ENCODE measurements at regions of chr11 and their contacts with region 1.

Region 1: DNA sequence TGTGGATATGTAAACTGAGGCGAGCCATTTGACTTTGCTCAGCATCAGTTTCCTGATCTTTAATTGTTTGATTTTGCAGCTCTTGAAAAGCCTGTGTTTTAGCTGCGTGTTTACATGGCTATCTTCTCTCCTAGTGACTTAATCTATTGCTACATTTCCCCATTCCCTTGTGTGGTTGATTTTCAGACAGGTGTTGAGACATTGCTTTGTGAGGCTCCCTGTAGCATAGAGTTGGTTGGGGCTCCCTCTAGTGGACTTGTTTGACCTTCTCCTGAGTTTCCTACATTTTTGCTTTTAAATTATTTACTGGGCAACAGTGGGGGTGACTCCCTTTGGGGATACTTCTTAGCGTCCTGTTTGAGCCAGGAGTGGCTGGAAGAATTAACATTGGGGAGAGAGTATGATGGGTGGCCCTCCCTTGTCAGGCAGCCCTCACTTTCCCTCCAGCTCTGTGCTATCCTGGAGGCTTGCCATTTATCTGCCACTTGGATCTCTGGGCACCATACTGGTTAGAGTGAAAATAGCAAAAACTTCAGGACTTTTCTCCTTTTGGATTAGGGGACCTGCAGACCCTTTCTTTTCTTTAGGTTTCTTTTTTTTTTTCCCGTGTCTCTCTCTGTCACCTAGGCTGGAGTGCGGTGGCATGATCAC is 9.2 kb upstream of the CBL start:
- DNase-seq: peak; percentile 94
- ATAC-seq: peak; percentile 87
- H3K4me3 ChIP-seq: no peak overlapping the region
- H3K27ac ChIP-seq: no peak overlapping the region
- H3K4me1 ChIP-seq: peaks cover 4% of the 10 kb centered on the region; the same call in 1 of the 2 replicates
- H3K27me3 ChIP-seq: no peaks in the 10 kb centered on the region
- CTCF ChIP-seq: peak; percentile 95

Region 2: GRCh38 chr11:119095066-119095880 is 101.7 kb before region 1 on chr11:
- CTCF ChIA-PET with region 1: interaction called, 4 read pairs
- POLR2A ChIA-PET with region 1: no interaction called
- intact Hi-C with region 1: loop called (anchors 2 kb)
- DNase-seq: peak; percentile 100
- ATAC-seq: peak; percentile 79
- H3K4me3 ChIP-seq: peak overlapping the region; percentile 90
- H3K27ac ChIP-seq: peak overlapping the region; percentile 53
- H3K4me1 ChIP-seq: peaks cover 28% of the 10 kb centered on the region
- H3K27me3 ChIP-seq: no peaks in the 10 kb centered on the region
- CTCF ChIP-seq: 0 out of 2 replicates have a peak, but pooled peaks have one; percentile 29

Region 3: GRCh38 chr11:119144825-119145486 is 52.0 kb before region 1 on chr11:
- CTCF ChIA-PET with region 1: interaction called, 9 read pairs
- POLR2A ChIA-PET with region 1: no interaction called
- intact Hi-C with region 1: loop called (anchors 1 kb)
- DNase-seq: peak; percentile 83
- ATAC-seq: peak; percentile 89
- H3K4me3 ChIP-seq: no peak overlapping the region; the same call in 1 of the 2 replicates
- H3K27ac ChIP-seq: no peak overlapping the region
- H3K4me1 ChIP-seq: 0 out of 2 replicates have a peak, but pooled peaks cover 3% of the 10 kb centered on the region
- H3K27me3 ChIP-seq: no peaks in the 10 kb centered on the region
- CTCF ChIP-seq: peak; percentile 63

Region 4: GRCh38 chr11:119168471-119169281 is 28.3 kb before region 1 on chr11 and contains the start of gene NLRX1:
- CTCF ChIA-PET with region 1: interaction called, 3 read pairs
- POLR2A ChIA-PET with region 1: interaction called, 3 read pairs
- intact Hi-C with region 1: loop called (anchors 1 kb)
- DNase-seq: peak; percentile 90
- ATAC-seq: peak; percentile 80
- H3K4me3 ChIP-seq: peak within 1 kb of the TSS; percentile 80
- H3K27ac ChIP-seq: peak within 1 kb of the TSS; percentile 36
- H3K4me1 ChIP-seq: peaks cover 22% of the 10 kb centered on the region
- H3K27me3 ChIP-seq: no peaks in the 10 kb centered on the region
- CTCF ChIP-seq: peak; percentile 90
- total RNA-seq, gene NLRX1: 16.8 and 17.2 TPM in 2 replicates

Region 5: DNA sequence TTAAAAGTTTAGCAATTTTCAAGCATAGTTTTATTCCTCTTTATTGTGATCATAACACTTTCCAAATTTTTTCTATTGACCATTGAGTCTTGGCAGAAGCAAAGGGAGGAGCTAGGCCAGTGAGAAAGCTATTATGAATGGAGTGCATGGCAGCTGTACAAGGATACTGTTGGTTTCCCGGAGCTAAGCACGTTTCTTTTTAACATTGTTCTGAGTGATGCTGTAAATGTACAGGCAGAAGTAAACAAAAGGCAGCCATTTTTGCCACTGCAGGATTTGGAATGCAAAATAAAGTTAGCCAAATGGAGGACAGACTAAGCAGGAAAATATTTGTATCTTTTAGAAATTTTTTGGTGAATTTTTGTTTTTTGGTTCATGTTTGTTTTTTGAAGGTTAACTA is 25.4 kb after region 1 on chr11:
- CTCF ChIA-PET with region 1: interaction called, 17 read pairs
- POLR2A ChIA-PET with region 1: no interaction called
- intact Hi-C with region 1: no loop called
- DNase-seq: peak; percentile 28
- ATAC-seq: no peak
- H3K4me3 ChIP-seq: no peak overlapping the region
- H3K27ac ChIP-seq: no peak overlapping the region
- H3K4me1 ChIP-seq: peaks cover 26% of the 10 kb centered on the region
- H3K27me3 ChIP-seq: no peaks in the 10 kb centered on the region
- CTCF ChIP-seq: no peak

Region 6: GRCh38 chr11:119284344-119285157 is 87.6 kb after region 1 on chr11:
- CTCF ChIA-PET with region 1: interaction called, 3 read pairs
- POLR2A ChIA-PET with region 1: no interaction called
- intact Hi-C with region 1: loop called (anchors 2 kb)
- DNase-seq: peak; percentile 73
- ATAC-seq: peak; percentile 89
- H3K4me3 ChIP-seq: no peak overlapping the region
- H3K27ac ChIP-seq: no peak overlapping the region
- H3K4me1 ChIP-seq: no peaks in the 10 kb centered on the region
- H3K27me3 ChIP-seq: no peaks in the 10 kb centered on the region
- CTCF ChIP-seq: peak; percentile 83

Measured in PC-3 (cell line).